Activated naive CD4-positive, alpha-beta T cell treated with anti-CD3 and anti-CD28 coated beads for 36 hours (primary cell): ENCODE measurements at regions of chr12 and their contacts with region 1.

Region 1: GRCh38 chr12:104733717-104734175 is 224.3 kb downstream of the SLC41A2 start:
- DNase-seq: peak; percentile 61
- H3K4me3 Mint-ChIP-seq: no peak overlapping the region
- H3K27ac Mint-ChIP-seq: no peak overlapping the region
- H3K4me1 Mint-ChIP-seq: peaks cover 41% of the 10 kb centered on the region
- H3K27me3 Mint-ChIP-seq: no peaks in the 10 kb centered on the region

Region 2: DNA sequence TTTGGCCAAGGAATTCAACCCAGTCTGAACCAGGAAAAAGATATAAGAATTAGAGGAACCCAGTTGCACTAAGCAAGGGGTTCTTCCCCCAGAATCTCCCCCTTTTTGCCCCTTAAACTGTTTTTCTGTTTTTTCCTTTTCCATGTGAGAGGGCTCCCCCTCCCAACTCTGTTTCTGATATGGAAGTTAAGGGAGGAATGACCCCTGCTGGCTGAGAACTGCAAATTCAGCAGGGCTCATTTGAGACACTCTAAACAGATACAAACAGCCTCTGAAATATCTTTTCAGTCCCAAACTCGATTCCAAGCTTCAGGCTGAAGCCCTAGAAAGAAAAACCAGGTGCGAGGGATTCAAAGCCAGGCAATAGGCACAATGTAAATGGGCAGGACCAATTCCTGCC is 91.7 kb after region 1 on chr12:
- CTCF ChIA-PET with region 1: no interaction called
- intact Hi-C with region 1: loop called (anchors 1 kb)
- DNase-seq: peak; percentile 32
- H3K4me3 Mint-ChIP-seq: no peak overlapping the region
- H3K27ac Mint-ChIP-seq: no peak overlapping the region
- H3K4me1 Mint-ChIP-seq: peaks cover 6% of the 10 kb centered on the region
- H3K27me3 Mint-ChIP-seq: no peaks in the 10 kb centered on the region